SK-N-SH (cell line): ENCODE measurements at regions of chr19 and their contacts with region 1.

Region 1: DNA sequence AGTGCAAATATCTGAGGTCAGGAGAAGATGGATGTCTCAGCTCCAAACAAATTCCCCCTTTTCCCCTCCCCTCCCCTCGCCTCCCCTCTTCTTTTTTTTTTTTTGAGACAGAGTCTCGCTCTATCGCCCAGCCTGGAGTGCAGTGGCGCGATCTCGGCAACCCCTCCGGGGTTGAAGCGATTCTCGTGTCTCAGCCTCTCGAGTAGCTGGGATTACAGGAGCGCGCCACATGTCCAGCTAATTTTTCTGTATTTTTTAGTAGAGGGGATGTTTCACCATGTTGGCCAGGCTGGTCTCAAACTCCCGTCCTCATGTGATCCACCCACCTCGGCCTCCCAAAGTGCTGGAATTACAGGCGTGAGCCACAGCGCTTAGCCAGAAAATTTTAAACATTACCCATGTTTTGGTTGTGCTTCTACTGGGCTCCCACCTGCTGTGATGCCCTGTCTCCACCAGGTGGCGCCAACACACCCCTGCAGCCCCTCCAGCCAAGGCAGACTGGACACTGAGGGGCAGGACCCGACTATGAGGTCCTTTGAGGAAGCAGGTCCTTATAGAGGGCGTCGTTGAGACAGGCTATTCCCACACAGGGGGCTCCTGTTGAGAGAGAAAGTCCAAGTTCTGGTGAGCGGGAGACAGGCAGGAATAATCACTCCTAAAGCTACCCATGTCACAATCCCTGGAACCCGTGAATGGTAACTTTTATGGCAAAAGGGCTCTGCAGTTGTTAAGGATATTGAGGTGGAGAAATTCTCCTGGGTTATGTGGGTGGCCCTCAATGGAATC is 6.3 kb downstream of the ERICH4 start:
- DNase-seq: peak; percentile 89
- H3K4me3 ChIP-seq: peak overlapping the region in 1 of 2 experiments; percentile 46; a peak in 1 of 4 replicates
- H3K27ac ChIP-seq: no peak overlapping the region
- H3K4me1 ChIP-seq: no peaks in the 10 kb centered on the region
- H3K27me3 ChIP-seq: peaks cover 80% of the 10 kb centered on the region
- CTCF ChIP-seq: peak; percentile 98
- EP300 ChIP-seq: no peak
- RAD21 ChIP-seq: peak; percentile 79

Region 2: GRCh38 chr19:41248895-41249294 is 200.4 kb before region 1 on chr19:
- CTCF ChIA-PET with region 1: no interaction called
- POLR2A ChIA-PET with region 1: no interaction called
- DNase-seq: no peak
- H3K4me3 ChIP-seq: no peak overlapping the region
- H3K27ac ChIP-seq: no peak overlapping the region
- H3K4me1 ChIP-seq: no peaks in the 10 kb centered on the region
- H3K27me3 ChIP-seq: no peaks in the 10 kb centered on the region
- CTCF ChIP-seq: no peak; the same call in 1 of the 2 replicates
- EP300 ChIP-seq: no peak
- RAD21 ChIP-seq: no peak

Region 3: GRCh38 chr19:41548954-41549688 is 99.8 kb after region 1 on chr19:
- CTCF ChIA-PET with region 1: interaction called, 11 read pairs
- POLR2A ChIA-PET with region 1: no interaction called
- DNase-seq: no peak
- H3K4me3 ChIP-seq: no peak overlapping the region
- H3K27ac ChIP-seq: no peak overlapping the region
- H3K4me1 ChIP-seq: no peaks in the 10 kb centered on the region
- H3K27me3 ChIP-seq: peaks cover 80% of the 10 kb centered on the region
- CTCF ChIP-seq: no peak
- EP300 ChIP-seq: no peak
- RAD21 ChIP-seq: no peak

Region 4: DNA sequence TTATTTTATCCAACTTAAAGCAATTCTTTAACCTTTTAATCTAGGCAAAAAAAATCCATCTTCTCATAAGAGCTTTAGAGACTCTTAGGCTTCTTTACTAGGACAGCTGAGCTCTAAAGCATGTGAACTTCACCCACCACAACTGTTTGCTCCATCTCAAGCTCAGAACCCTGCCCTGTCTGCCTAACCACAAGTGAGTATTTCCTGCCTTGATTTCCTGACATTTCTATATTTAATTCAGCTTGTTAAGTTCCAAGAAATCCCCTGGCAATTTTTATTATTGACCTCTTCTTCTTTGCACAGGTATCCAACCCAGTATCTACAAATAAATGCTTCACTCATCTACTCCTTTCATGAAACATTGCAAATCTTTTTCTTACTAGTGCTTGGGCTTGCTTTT is 105.6 kb after region 1 on chr19:
- CTCF ChIA-PET with region 1: interaction called, 25 read pairs
- POLR2A ChIA-PET with region 1: no interaction called
- DNase-seq: no peak
- H3K4me3 ChIP-seq: no peak overlapping the region
- H3K27ac ChIP-seq: no peak overlapping the region
- H3K4me1 ChIP-seq: no peaks in the 10 kb centered on the region
- H3K27me3 ChIP-seq: peaks cover 57% of the 10 kb centered on the region
- CTCF ChIP-seq: no peak
- EP300 ChIP-seq: no peak
- RAD21 ChIP-seq: no peak

Region 5: GRCh38 chr19:41641879-41642485 is 192.7 kb after region 1 on chr19:
- CTCF ChIA-PET with region 1: no interaction called
- POLR2A ChIA-PET with region 1: no interaction called
- DNase-seq: peak; percentile 78
- H3K4me3 ChIP-seq: peak overlapping the region in 1 of 2 experiments; percentile 22; a peak in 1 of 4 replicates
- H3K27ac ChIP-seq: no peak overlapping the region
- H3K4me1 ChIP-seq: no peaks in the 10 kb centered on the region
- H3K27me3 ChIP-seq: no peaks in the 10 kb centered on the region; the same call in 1 of the 2 replicates
- CTCF ChIP-seq: peak; percentile 92
- EP300 ChIP-seq: no peak
- RAD21 ChIP-seq: peak; percentile 68